ENCODE measurements at regions of chr14 and their contacts with region 1.

Region 1: GRCh38 chr14:58427281-58428117 is at the starts of genes KIAA0586 and TIMM9:
- DNase-seq: peak; percentile 85
- ATAC-seq: peak; percentile 93
- H3K4me3 Mint-ChIP-seq: peak within 1 kb of the TSS; percentile 94
- H3K27ac Mint-ChIP-seq: peak within 1 kb of the TSS; percentile 97
- H3K4me1 Mint-ChIP-seq: peaks cover 46% of the 10 kb centered on the region
- H3K27me3 Mint-ChIP-seq: no peaks in the 10 kb centered on the region
- CTCF ChIP-seq: no peak
- total RNA-seq, gene KIAA0586: 18.3 and 19.8 TPM in 2 replicates
- total RNA-seq, gene TIMM9: 29.1 and 35.7 TPM in 2 replicates

Region 2: GRCh38 chr14:58199726-58200479 is 227.6 kb before region 1 on chr14 and contains the start of gene ACTR10:
- CTCF ChIA-PET with region 1: no interaction called
- POLR2A ChIA-PET with region 1: no interaction called
- intact Hi-C with region 1: loop called (anchors 1 kb)
- DNase-seq: peak; percentile 93
- ATAC-seq: peak; percentile 88
- H3K4me3 Mint-ChIP-seq: peak within 1 kb of the TSS; percentile 94
- H3K27ac Mint-ChIP-seq: peak within 1 kb of the TSS; percentile 93
- H3K4me1 Mint-ChIP-seq: peaks cover 28% of the 10 kb centered on the region
- H3K27me3 Mint-ChIP-seq: no peaks in the 10 kb centered on the region
- CTCF ChIP-seq: no peak
- total RNA-seq, gene ACTR10: 36.5 and 40.5 TPM in 2 replicates

Region 3: GRCh38 chr14:58244556-58245387 is 182.7 kb before region 1 on chr14 and contains the start of gene PSMA3:
- CTCF ChIA-PET with region 1: no interaction called
- POLR2A ChIA-PET with region 1: interaction called, 9 read pairs
- intact Hi-C with region 1: loop called (anchors 1 kb)
- DNase-seq: peak; percentile 94
- ATAC-seq: peak; percentile 91
- H3K4me3 Mint-ChIP-seq: peak within 1 kb of the TSS; percentile 98
- H3K27ac Mint-ChIP-seq: peak within 1 kb of the TSS; percentile 98
- H3K4me1 Mint-ChIP-seq: peaks cover 51% of the 10 kb centered on the region
- H3K27me3 Mint-ChIP-seq: peaks cover 1% of the 10 kb centered on the region
- CTCF ChIP-seq: no peak
- total RNA-seq, gene PSMA3: 204 and 208 TPM in 2 replicates

Region 4: GRCh38 chr14:58395812-58396788 is 31.4 kb before region 1 on chr14 and contains the start of gene TOMM20L:
- CTCF ChIA-PET with region 1: interaction called, 5 read pairs
- POLR2A ChIA-PET with region 1: interaction called, 19 read pairs
- intact Hi-C with region 1: loop called (anchors 1 kb)
- DNase-seq: peak; percentile 83
- ATAC-seq: peak; percentile 92
- H3K4me3 Mint-ChIP-seq: peak within 1 kb of the TSS; percentile 83
- H3K27ac Mint-ChIP-seq: peak within 1 kb of the TSS; percentile 77
- H3K4me1 Mint-ChIP-seq: peaks cover 14% of the 10 kb centered on the region
- H3K27me3 Mint-ChIP-seq: no peaks in the 10 kb centered on the region
- CTCF ChIP-seq: peak; percentile 76
- total RNA-seq, gene TOMM20L: 0.37 TPM in 1 of 2 replicates, not detected in the other

Region 5: GRCh38 chr14:58705066-58705465 is 277.6 kb after region 1 on chr14:
- CTCF ChIA-PET with region 1: no interaction called
- POLR2A ChIA-PET with region 1: no interaction called
- intact Hi-C with region 1: no loop called
- DNase-seq: no peak
- ATAC-seq: no peak
- H3K4me3 Mint-ChIP-seq: no peak overlapping the region
- H3K27ac Mint-ChIP-seq: no peak overlapping the region
- H3K4me1 Mint-ChIP-seq: no peaks in the 10 kb centered on the region
- H3K27me3 Mint-ChIP-seq: peaks cover 3% of the 10 kb centered on the region
- CTCF ChIP-seq: no peak

Region 6: GRCh38 chr14:59464486-59465315 is 1037.2 kb after region 1 on chr14:
- CTCF ChIA-PET with region 1: no interaction called
- POLR2A ChIA-PET with region 1: no interaction called
- intact Hi-C with region 1: loop called (anchors 1 kb)
- DNase-seq: peak; percentile 64
- ATAC-seq: peak; percentile 68
- H3K4me3 Mint-ChIP-seq: peak overlapping the region; percentile 86
- H3K27ac Mint-ChIP-seq: peak overlapping the region; percentile 48
- H3K4me1 Mint-ChIP-seq: peaks cover 14% of the 10 kb centered on the region
- H3K27me3 Mint-ChIP-seq: no peaks in the 10 kb centered on the region
- CTCF ChIP-seq: no peak